Heart right ventricle (tissue), 16 donors: ENCODE measurements at regions of chr2 and their contacts with region 1.

Region 1: GRCh38 chr2:207887500-207887899 is 117.8 kb upstream of the FZD5 start:
- DNase-seq: no peak
- ATAC-seq: peak in 7 of 8 donors; percentile 51 to 92 (median 83)
- H3K4me3 ChIP-seq: no peak overlapping the region
- H3K27ac ChIP-seq: peak overlapping the region in 7 of 10 donors; percentile 14 to 74 (median 60)
- H3K4me1 ChIP-seq: peaks cover 0 to 20% (median 9%) of the 10 kb centered on the region in 9 donors
- H3K27me3 ChIP-seq: no peaks in the 10 kb centered on the region
- CTCF ChIP-seq: no peak

Region 2: GRCh38 chr2:207828361-207829057 is 59.0 kb before region 1 on chr2:
- intact Hi-C with region 1: loop called in 1 of 10 experiments (anchors 5 kb)
- DNase-seq: no peak
- ATAC-seq: no peak
- H3K4me3 ChIP-seq: no peak overlapping the region
- H3K27ac ChIP-seq: no peak overlapping the region
- H3K4me1 ChIP-seq: peaks cover 0 to 44% (median 20%) of the 10 kb centered on the region in 9 donors
- H3K27me3 ChIP-seq: no peaks in the 10 kb centered on the region
- CTCF ChIP-seq: no peak

Region 3: GRCh38 chr2:208228476-208228875 is 341.0 kb after region 1 on chr2:
- intact Hi-C with region 1: no loop called
- DNase-seq: no peak
- ATAC-seq: no peak
- H3K4me3 ChIP-seq: no peak overlapping the region
- H3K27ac ChIP-seq: no peak overlapping the region
- H3K4me1 ChIP-seq: no peaks in the 10 kb centered on the region
- H3K27me3 ChIP-seq: no peaks in the 10 kb centered on the region
- CTCF ChIP-seq: no peak